ENCODE measurements at regions of chr2 and their contacts with region 1.

Region 1: DNA sequence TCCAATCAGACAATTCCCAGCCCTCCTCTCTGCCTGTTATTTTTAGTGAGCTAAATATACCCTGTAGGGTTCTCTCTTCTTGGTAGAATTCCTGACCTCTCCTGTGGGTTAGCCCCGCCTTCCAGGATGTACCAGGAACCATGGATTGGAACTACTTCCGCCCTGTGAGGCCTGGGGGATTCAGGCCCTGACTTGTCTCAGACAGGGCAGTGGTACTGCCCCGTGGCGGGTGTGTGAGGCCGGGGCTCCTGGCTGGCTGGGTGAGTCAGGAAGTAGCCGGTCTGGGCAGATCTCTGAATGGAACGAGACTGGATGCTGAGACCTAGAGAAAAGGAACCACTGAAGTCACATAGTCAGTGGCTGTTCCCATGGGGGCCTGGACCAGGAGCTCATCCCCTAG is 50.5 kb downstream of the DYSF start:
- DNase-seq: peak; percentile 62
- ATAC-seq: peak; percentile 42
- H3K4me3 ChIP-seq: no peak overlapping the region
- H3K27ac ChIP-seq: peak overlapping the region; percentile 58
- H3K4me1 ChIP-seq: peaks cover 20% of the 10 kb centered on the region
- H3K27me3 ChIP-seq: no peaks in the 10 kb centered on the region
- CTCF ChIP-seq: no peak

Region 2: DNA sequence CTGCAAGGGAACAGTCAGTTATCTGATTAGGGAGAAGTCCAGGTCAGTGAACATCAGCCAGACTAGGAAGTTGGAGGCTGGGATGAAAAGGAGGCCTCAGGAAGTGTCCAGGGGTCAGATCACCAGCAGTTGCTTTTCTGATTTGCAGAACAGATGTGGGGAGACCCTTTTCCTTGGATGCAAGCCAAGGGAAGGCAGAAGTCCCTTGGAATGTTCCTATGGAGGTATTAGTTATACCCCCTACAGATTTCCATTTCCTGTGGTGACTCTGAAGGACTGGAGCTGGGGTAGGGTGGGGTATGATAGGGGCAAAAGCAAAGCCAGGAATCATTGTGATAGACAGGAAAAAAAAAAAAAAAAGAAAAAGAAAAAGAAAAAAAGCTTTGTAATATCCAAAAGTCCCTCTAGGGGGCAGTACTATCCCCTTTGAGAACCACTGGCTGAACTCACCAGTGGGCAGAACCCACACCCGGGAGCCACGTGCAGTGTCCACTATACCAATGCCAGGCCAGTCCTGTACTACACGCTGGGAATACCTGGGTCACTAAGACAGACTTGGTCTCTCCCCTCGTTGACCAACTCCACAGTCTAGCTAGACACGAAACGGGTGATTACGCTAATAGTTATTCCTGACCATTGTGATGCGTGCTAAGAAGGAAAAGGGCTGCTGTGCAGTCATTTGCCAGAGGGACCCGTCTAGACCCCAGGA is 43.1 kb before region 1 on chr2:
- intact Hi-C with region 1: loop called (anchors 5 kb)
- DNase-seq: no peak
- ATAC-seq: peak; percentile 74
- H3K4me3 ChIP-seq: no peak overlapping the region
- H3K27ac ChIP-seq: no peak overlapping the region
- H3K4me1 ChIP-seq: no peaks in the 10 kb centered on the region
- H3K27me3 ChIP-seq: peaks cover 22% of the 10 kb centered on the region
- CTCF ChIP-seq: peak; percentile 63

Measured in upper lobe of right lung (tissue), 1 donor.